PC-3 (cell line): ENCODE measurements at regions of chr9 and their contacts with region 1.

Region 1: DNA sequence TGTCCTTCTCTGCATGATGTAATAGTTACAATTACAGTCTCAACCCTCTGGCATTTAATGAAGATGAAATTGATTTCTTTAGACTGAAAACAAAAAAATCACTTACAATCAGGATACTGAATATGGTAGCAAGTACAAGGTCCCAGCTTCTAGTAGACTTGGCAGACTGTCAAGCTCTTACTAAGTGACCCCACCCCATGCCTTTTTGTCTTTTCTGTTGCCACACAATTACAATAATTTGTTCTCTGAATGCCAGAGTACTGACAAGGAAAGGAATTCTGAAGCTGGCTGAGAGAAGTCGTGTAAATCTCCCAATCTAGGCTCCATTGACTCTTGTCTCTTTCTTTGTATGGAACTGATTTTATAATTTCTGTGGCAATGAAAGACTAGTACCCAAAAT is 154.2 kb downstream of the TMC1 start:
- DNase-seq: no peak
- ATAC-seq: no peak
- H3K4me3 ChIP-seq: no peak overlapping the region
- H3K27ac ChIP-seq: no peak overlapping the region
- H3K4me1 ChIP-seq: no peaks in the 10 kb centered on the region
- H3K27me3 ChIP-seq: no peaks in the 10 kb centered on the region
- CTCF ChIP-seq: no peak

Region 2: GRCh38 chr9:72615931-72616330 is 59.7 kb before region 1 on chr9:
- CTCF ChIA-PET with region 1: no interaction called
- POLR2A ChIA-PET with region 1: no interaction called
- intact Hi-C with region 1: loop called (anchors 10 kb)
- DNase-seq: peak; percentile 59
- ATAC-seq: peak; percentile 40; the same call in 1 of the 2 replicates
- H3K4me3 ChIP-seq: no peak overlapping the region
- H3K27ac ChIP-seq: no peak overlapping the region
- H3K4me1 ChIP-seq: no peaks in the 10 kb centered on the region
- H3K27me3 ChIP-seq: no peaks in the 10 kb centered on the region
- CTCF ChIP-seq: no peak